CD4-positive, alpha-beta T cell (primary cell): ENCODE measurements at regions of chr16 and their contacts with region 1.

Region 1: GRCh38 chr16:8868416-8869211 is at the start of gene CARHSP1:
- DNase-seq: peak; percentile 62 to 92 (median 76)
- ATAC-seq: peak; percentile 74
- H3K4me3 ChIP-seq: peak within 1 kb of the TSS; percentile 85
- H3K4me3 Mint-ChIP-seq: peak within 1 kb of the TSS; percentile 95
- H3K27ac ChIP-seq: peak within 1 kb of the TSS; percentile 32 to 72
- H3K27ac Mint-ChIP-seq: peak within 1 kb of the TSS; percentile 85
- H3K4me1 ChIP-seq: peaks cover 59% of the 10 kb centered on the region
- H3K4me1 Mint-ChIP-seq: peaks cover 50% of the 10 kb centered on the region
- H3K27me3 ChIP-seq: no peaks in the 10 kb centered on the region
- H3K27me3 Mint-ChIP-seq: no peaks in the 10 kb centered on the region
- CTCF ChIP-seq: no peak
- total RNA-seq, gene CARHSP1: 25.5 to 27.8 TPM

Region 2: GRCh38 chr16:8621572-8622314 is 246.9 kb before region 1 on chr16 and contains the start of gene METTL22:
- CTCF ChIA-PET with region 1: no interaction called
- POLR2A ChIA-PET with region 1: no interaction called
- intact Hi-C with region 1: loop called in 1 of 2 experiments (anchors 5 kb)
- DNase-seq: peak; percentile 83 to 97 (median 90)
- ATAC-seq: peak; percentile 98
- H3K4me3 ChIP-seq: peak within 1 kb of the TSS; percentile 100
- H3K4me3 Mint-ChIP-seq: peak within 1 kb of the TSS; percentile 94
- H3K27ac ChIP-seq: peak within 1 kb of the TSS; percentile 33 to 72
- H3K27ac Mint-ChIP-seq: peak within 1 kb of the TSS; percentile 84
- H3K4me1 ChIP-seq: peaks cover 20% of the 10 kb centered on the region
- H3K4me1 Mint-ChIP-seq: peaks cover 22% of the 10 kb centered on the region
- H3K27me3 ChIP-seq: no peaks in the 10 kb centered on the region
- H3K27me3 Mint-ChIP-seq: peaks cover 10% of the 10 kb centered on the region
- CTCF ChIP-seq: no peak
- total RNA-seq, gene METTL22: 23.2 to 26.5 TPM

Region 3: DNA sequence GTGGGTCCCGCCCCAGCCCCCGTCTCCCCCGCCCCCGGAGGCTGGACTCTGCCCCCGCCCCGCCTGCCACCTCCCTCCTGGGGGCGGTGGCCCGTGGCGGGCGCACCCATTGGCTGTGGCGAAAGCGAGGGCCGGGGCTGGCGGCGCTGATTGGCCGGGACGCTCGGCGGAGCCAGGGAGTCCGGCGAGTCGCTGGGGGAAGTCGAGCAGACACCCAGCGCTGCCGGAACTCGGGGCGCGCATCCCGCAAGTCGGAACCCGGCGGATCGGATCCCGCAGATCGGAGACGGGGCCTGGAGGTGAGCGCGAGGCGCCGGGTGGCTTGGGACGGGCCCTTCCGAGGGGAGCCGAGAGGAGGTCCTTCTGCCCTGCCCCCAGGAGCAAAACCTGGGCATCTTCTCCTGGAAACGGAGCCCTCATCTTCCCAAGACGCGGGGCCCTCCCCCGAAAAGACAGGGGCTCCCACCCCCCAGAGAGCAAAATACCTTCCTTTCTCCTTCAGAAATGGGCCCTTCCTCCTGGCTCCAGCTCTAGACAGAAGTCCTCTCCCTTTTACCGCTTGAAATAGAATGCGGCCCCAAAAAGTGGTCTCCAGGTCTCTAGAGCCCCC is 194.1 kb before region 1 on chr16 and contains the start of gene ABAT:
- CTCF ChIA-PET with region 1: no interaction called
- POLR2A ChIA-PET with region 1: interaction called, 4 read pairs
- intact Hi-C with region 1: loop called in 1 of 2 experiments (anchors 2 kb)
- DNase-seq: peak; percentile 78 to 93 (median 86)
- ATAC-seq: peak; percentile 96
- H3K4me3 ChIP-seq: peak within 1 kb of the TSS; percentile 92
- H3K4me3 Mint-ChIP-seq: peak within 1 kb of the TSS; percentile 97
- H3K27ac ChIP-seq: peak within 1 kb of the TSS in 1 of 2 donors; percentile 46
- H3K27ac Mint-ChIP-seq: peak within 1 kb of the TSS; percentile 91
- H3K4me1 ChIP-seq: peaks cover 25% of the 10 kb centered on the region
- H3K4me1 Mint-ChIP-seq: peaks cover 24% of the 10 kb centered on the region
- H3K27me3 ChIP-seq: no peaks in the 10 kb centered on the region
- H3K27me3 Mint-ChIP-seq: no peaks in the 10 kb centered on the region
- CTCF ChIP-seq: no peak
- total RNA-seq, gene ABAT: 4.1 to 4.4 TPM

Region 4: DNA sequence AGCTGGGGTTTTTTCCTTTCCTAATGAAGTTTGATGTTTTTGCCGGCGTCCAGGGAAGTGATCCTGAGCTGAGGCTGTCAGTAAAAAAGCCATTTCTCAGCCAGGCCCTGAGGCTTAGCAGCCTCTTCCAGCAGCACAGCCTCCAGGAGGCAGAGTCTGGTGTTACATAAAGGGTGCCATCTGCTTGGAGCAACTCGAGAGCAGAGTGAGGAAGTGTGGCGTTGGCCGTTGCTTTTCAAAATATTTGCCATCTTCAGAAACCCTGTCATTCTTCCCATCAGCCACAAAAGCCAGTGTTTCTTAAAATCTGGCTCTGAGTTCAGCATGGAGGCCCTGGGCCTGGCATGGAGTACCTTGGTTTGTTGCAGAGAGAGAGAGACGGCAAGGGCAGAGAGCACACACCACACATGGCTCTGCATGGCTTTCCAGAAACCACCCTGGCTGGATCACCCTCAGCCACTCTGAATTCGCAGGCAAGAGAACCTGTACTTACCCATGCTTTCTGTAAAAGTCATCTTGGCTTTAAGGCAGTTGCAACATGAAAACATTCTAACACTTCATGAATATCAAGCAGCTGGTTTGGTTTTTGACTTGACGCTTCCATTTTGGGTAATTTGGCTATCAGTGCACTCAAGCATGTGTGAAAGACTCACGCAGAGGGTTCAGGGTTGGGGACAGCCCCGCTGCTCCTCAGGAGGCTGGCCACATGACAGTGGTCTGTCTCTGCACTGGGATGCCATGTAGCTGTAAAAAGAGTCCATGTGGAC is 49.9 kb before region 1 on chr16:
- CTCF ChIA-PET with region 1: no interaction called
- POLR2A ChIA-PET with region 1: interaction called, 14 read pairs
- intact Hi-C with region 1: loop called in 1 of 2 experiments (anchors 5 kb)
- DNase-seq: no peak
- ATAC-seq: no peak
- H3K4me3 ChIP-seq: no peak overlapping the region
- H3K4me3 Mint-ChIP-seq: no peak overlapping the region
- H3K27ac ChIP-seq: no peak overlapping the region
- H3K27ac Mint-ChIP-seq: no peak overlapping the region
- H3K4me1 ChIP-seq: peaks cover 8% of the 10 kb centered on the region
- H3K4me1 Mint-ChIP-seq: peaks cover 21% of the 10 kb centered on the region
- H3K27me3 ChIP-seq: no peaks in the 10 kb centered on the region
- H3K27me3 Mint-ChIP-seq: no peaks in the 10 kb centered on the region
- CTCF ChIP-seq: no peak

Region 5: GRCh38 chr16:8855011-8855786 is 13.4 kb before region 1 on chr16:
- CTCF ChIA-PET with region 1: no interaction called
- POLR2A ChIA-PET with region 1: interaction called, 10 read pairs
- intact Hi-C with region 1: no loop called
- DNase-seq: no peak
- ATAC-seq: no peak
- H3K4me3 ChIP-seq: no peak overlapping the region
- H3K4me3 Mint-ChIP-seq: no peak overlapping the region
- H3K27ac ChIP-seq: no peak overlapping the region
- H3K27ac Mint-ChIP-seq: peak overlapping the region; percentile 34
- H3K4me1 ChIP-seq: peaks cover 18% of the 10 kb centered on the region
- H3K4me1 Mint-ChIP-seq: peaks cover 27% of the 10 kb centered on the region
- H3K27me3 ChIP-seq: no peaks in the 10 kb centered on the region
- H3K27me3 Mint-ChIP-seq: no peaks in the 10 kb centered on the region
- CTCF ChIP-seq: no peak

Region 6: GRCh38 chr16:9279291-9280068 is 410.9 kb after region 1 on chr16:
- CTCF ChIA-PET with region 1: no interaction called
- POLR2A ChIA-PET with region 1: no interaction called
- intact Hi-C with region 1: no loop called
- DNase-seq: peak in 1 of 14 experiments; percentile 8
- ATAC-seq: no peak
- H3K4me3 ChIP-seq: no peak overlapping the region
- H3K4me3 Mint-ChIP-seq: no peak overlapping the region
- H3K27ac ChIP-seq: no peak overlapping the region
- H3K27ac Mint-ChIP-seq: no peak overlapping the region
- H3K4me1 ChIP-seq: no peaks in the 10 kb centered on the region
- H3K4me1 Mint-ChIP-seq: no peaks in the 10 kb centered on the region
- H3K27me3 ChIP-seq: peaks cover 0 to 3% of the 10 kb centered on the region in 2 experiments
- H3K27me3 Mint-ChIP-seq: no peaks in the 10 kb centered on the region
- CTCF ChIP-seq: no peak